CD8-positive, alpha-beta T cell (primary cell): ENCODE measurements at regions of chrX and their contacts with region 1.

Region 1: GRCh38 chrX:55057675-55058249 is 17.1 kb upstream of the PAGE2B start:
- DNase-seq: peak in 5 of 9 experiments; percentile 1 to 64 (median 33)
- ATAC-seq: peak; percentile 75
- H3K4me3 ChIP-seq: peak overlapping the region in 1 of 2 experiments; percentile 20
- H3K4me3 Mint-ChIP-seq: peak overlapping the region; percentile 71
- H3K27ac ChIP-seq: no peak overlapping the region
- H3K27ac Mint-ChIP-seq: peak overlapping the region; percentile 77
- H3K4me1 ChIP-seq: peaks cover 12% of the 10 kb centered on the region
- H3K4me1 Mint-ChIP-seq: peaks cover 15% of the 10 kb centered on the region
- H3K27me3 ChIP-seq: no peaks in the 10 kb centered on the region
- H3K27me3 Mint-ChIP-seq: no peaks in the 10 kb centered on the region
- CTCF ChIP-seq: peak; percentile 87

Region 2: DNA sequence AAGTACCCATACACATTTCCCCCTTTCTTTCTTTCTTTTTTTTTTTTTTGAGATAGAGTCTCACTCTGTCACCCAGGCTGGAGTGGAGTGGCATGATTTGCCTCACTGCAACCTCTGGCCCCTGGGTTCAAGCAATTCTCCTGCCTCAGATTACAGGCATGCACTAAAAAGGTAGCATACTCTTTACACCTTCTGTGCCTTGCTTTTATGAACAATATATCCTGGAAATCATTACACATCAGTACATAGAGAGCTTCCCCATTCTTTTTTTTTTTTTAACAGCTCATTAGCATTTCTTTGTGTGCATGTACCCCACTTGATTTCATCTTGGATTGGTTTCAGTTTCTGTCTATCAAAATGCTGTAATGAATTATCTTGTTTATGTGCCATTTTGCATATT is 1605.0 kb before region 1 on chrX:
- CTCF ChIA-PET with region 1: no interaction called
- POLR2A ChIA-PET with region 1: no interaction called
- intact Hi-C with region 1: no loop called
- DNase-seq: no peak
- ATAC-seq: no peak
- H3K4me3 ChIP-seq: no peak overlapping the region
- H3K4me3 Mint-ChIP-seq: no peak overlapping the region
- H3K27ac ChIP-seq: no peak overlapping the region
- H3K27ac Mint-ChIP-seq: no peak overlapping the region
- H3K4me1 ChIP-seq: no peaks in the 10 kb centered on the region
- H3K4me1 Mint-ChIP-seq: no peaks in the 10 kb centered on the region
- H3K27me3 ChIP-seq: no peaks in the 10 kb centered on the region
- H3K27me3 Mint-ChIP-seq: peaks cover 7% of the 10 kb centered on the region
- CTCF ChIP-seq: no peak

Region 3: GRCh38 chrX:54182864-54183608 is 874.7 kb before region 1 on chrX and contains the start of gene FAM120C:
- CTCF ChIA-PET with region 1: no interaction called
- POLR2A ChIA-PET with region 1: no interaction called
- intact Hi-C with region 1: loop called in 1 of 2 experiments (anchors 10 kb)
- DNase-seq: peak; percentile 26 to 83 (median 59)
- ATAC-seq: peak; percentile 70
- H3K4me3 ChIP-seq: peak within 1 kb of the TSS; percentile 60 to 72
- H3K4me3 Mint-ChIP-seq: peak within 1 kb of the TSS; percentile 78
- H3K27ac ChIP-seq: peak within 1 kb of the TSS; percentile 75 to 83
- H3K27ac Mint-ChIP-seq: peak within 1 kb of the TSS; percentile 88
- H3K4me1 ChIP-seq: peaks cover 38% of the 10 kb centered on the region
- H3K4me1 Mint-ChIP-seq: peaks cover 43% of the 10 kb centered on the region
- H3K27me3 ChIP-seq: no peaks in the 10 kb centered on the region
- H3K27me3 Mint-ChIP-seq: no peaks in the 10 kb centered on the region
- CTCF ChIP-seq: no peak
- total RNA-seq, gene FAM120C: 10.9 to 11.1 TPM

Region 4: DNA sequence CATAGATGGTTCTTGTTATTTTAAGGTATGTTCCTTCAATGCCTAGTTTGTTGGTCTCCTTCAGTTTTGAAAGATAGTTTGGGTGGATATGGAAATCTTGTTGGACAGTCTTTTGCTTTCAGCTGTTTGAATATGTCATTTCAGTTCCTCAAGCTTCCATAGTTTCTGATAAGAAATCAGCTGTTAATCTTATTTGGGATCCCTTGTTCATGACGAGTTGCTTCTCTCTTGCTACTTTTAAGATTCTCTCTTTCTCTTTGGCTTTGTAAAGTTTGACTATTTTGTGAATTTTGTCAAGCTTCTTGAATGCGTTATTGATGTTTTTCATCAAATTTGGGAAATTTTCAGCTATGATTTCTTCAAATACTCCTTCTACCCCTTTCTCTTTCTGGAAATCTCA is 398.2 kb before region 1 on chrX:
- CTCF ChIA-PET with region 1: no interaction called
- POLR2A ChIA-PET with region 1: no interaction called
- intact Hi-C with region 1: no loop called
- DNase-seq: no peak
- ATAC-seq: no peak
- H3K4me3 ChIP-seq: no peak overlapping the region
- H3K4me3 Mint-ChIP-seq: no peak overlapping the region
- H3K27ac ChIP-seq: no peak overlapping the region
- H3K27ac Mint-ChIP-seq: no peak overlapping the region
- H3K4me1 ChIP-seq: no peaks in the 10 kb centered on the region
- H3K4me1 Mint-ChIP-seq: no peaks in the 10 kb centered on the region
- H3K27me3 ChIP-seq: no peaks in the 10 kb centered on the region
- H3K27me3 Mint-ChIP-seq: no peaks in the 10 kb centered on the region
- CTCF ChIP-seq: no peak

Region 5: DNA sequence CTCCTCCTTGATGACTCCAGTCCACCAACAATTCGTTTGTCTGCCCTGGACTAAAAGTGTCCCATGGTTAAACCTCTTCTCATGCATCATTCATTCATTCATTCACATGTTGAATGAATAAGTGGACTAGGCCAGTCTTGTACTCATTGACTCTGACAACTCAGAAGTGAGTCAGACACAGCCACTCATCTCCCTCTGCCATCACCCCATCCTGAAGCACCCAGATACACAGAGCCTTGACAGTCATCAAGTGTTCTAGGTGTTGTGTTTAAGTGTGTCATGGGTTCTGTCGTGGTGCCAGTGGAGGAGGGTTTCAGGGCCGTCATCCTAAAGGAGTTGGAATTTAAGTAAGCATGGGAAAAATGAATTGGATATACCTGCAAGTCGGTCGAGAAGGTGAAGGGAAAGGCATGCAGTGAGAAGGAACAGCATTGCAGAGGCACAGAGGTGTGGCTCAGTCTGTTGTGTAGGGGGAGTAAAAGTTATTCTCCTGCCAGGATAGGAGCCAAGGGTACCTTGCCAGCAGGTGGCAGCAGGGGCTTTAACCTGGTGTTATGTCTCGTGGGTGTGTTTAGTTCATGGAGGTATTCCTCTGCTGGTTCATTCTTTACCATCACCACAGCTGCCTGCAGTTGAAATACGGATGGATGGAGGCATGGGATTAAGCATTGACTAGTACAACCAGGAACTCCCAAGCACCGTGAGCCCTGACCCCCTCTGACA is 231.9 kb before region 1 on chrX:
- CTCF ChIA-PET with region 1: no interaction called
- POLR2A ChIA-PET with region 1: no interaction called
- intact Hi-C with region 1: loop called in 1 of 2 experiments (anchors 5 kb)
- DNase-seq: peak in 4 of 9 experiments; percentile 22 to 47 (median 30)
- ATAC-seq: peak; percentile 49
- H3K4me3 ChIP-seq: no peak overlapping the region
- H3K4me3 Mint-ChIP-seq: no peak overlapping the region
- H3K27ac ChIP-seq: no peak overlapping the region
- H3K27ac Mint-ChIP-seq: no peak overlapping the region
- H3K4me1 ChIP-seq: no peaks in the 10 kb centered on the region
- H3K4me1 Mint-ChIP-seq: no peaks in the 10 kb centered on the region
- H3K27me3 ChIP-seq: no peaks in the 10 kb centered on the region
- H3K27me3 Mint-ChIP-seq: no peaks in the 10 kb centered on the region
- CTCF ChIP-seq: no peak

Region 6: DNA sequence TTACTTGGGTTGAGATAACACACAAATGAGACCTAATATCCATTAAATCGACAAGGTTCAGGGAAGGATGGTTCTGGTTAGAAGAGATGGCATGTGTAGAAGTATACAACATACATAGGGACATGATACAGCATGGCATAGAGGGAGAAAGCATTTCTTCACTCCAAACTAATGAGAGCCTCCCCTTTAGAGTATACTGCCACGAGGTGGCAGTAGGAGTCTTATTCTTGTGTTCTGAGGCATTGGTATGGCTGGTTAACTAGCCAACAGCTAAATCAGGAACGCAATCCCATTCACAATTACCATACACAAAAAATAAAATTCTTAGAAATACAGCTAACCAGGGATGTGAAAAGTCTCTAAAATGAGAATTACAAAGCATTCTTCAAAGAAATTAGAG is 166.2 kb before region 1 on chrX:
- CTCF ChIA-PET with region 1: interaction called, 22 read pairs
- POLR2A ChIA-PET with region 1: no interaction called
- intact Hi-C with region 1: loop called in 1 of 2 experiments (anchors 1 kb)
- DNase-seq: peak in 8 of 9 experiments; percentile 1 to 67 (median 25)
- ATAC-seq: peak; percentile 38
- H3K4me3 ChIP-seq: no peak overlapping the region
- H3K4me3 Mint-ChIP-seq: no peak overlapping the region
- H3K27ac ChIP-seq: no peak overlapping the region
- H3K27ac Mint-ChIP-seq: no peak overlapping the region
- H3K4me1 ChIP-seq: no peaks in the 10 kb centered on the region
- H3K4me1 Mint-ChIP-seq: no peaks in the 10 kb centered on the region
- H3K27me3 ChIP-seq: no peaks in the 10 kb centered on the region
- H3K27me3 Mint-ChIP-seq: peaks cover 12% of the 10 kb centered on the region
- CTCF ChIP-seq: peak; percentile 18

Region 7: DNA sequence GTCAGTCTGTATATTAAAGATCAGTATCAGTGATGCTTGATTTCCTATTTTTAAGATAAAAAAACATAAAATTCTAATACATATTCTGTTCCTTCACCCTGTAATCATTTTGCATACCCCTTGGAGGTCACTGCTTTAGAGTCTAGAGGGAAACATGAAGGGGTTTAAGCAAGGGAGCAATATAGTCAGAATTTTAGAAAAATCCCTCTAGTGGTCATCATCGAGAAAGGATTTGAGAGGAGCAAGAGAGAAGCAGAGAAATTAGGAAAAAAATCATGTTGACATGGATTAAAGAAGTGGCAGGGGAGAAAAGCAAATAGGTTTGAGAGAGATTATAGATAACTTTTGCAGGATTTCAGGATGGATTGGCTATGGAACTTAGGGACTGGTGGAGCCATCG is 46.5 kb before region 1 on chrX:
- CTCF ChIA-PET with region 1: interaction called, 3 read pairs
- POLR2A ChIA-PET with region 1: no interaction called
- intact Hi-C with region 1: loop called in 1 of 2 experiments (anchors 5 kb)
- DNase-seq: no peak
- ATAC-seq: no peak
- H3K4me3 ChIP-seq: no peak overlapping the region
- H3K4me3 Mint-ChIP-seq: no peak overlapping the region
- H3K27ac ChIP-seq: no peak overlapping the region
- H3K27ac Mint-ChIP-seq: no peak overlapping the region
- H3K4me1 ChIP-seq: peaks cover 5% of the 10 kb centered on the region
- H3K4me1 Mint-ChIP-seq: peaks cover 15% of the 10 kb centered on the region
- H3K27me3 ChIP-seq: no peaks in the 10 kb centered on the region
- H3K27me3 Mint-ChIP-seq: no peaks in the 10 kb centered on the region
- CTCF ChIP-seq: peak; percentile 12